ENCODE measurements at regions of chr6 and their contacts with region 1.

Region 1: GRCh38 chr6:29938746-29939508 is 3.4 kb upstream of the HLA-A start:
- DNase-seq: no peak
- H3K4me3 Mint-ChIP-seq: no peak overlapping the region
- H3K27ac Mint-ChIP-seq: no peak overlapping the region
- H3K4me1 Mint-ChIP-seq: peaks cover 14% of the 10 kb centered on the region
- H3K27me3 Mint-ChIP-seq: no peaks in the 10 kb centered on the region
- CTCF ChIP-seq: no peak

Region 2: DNA sequence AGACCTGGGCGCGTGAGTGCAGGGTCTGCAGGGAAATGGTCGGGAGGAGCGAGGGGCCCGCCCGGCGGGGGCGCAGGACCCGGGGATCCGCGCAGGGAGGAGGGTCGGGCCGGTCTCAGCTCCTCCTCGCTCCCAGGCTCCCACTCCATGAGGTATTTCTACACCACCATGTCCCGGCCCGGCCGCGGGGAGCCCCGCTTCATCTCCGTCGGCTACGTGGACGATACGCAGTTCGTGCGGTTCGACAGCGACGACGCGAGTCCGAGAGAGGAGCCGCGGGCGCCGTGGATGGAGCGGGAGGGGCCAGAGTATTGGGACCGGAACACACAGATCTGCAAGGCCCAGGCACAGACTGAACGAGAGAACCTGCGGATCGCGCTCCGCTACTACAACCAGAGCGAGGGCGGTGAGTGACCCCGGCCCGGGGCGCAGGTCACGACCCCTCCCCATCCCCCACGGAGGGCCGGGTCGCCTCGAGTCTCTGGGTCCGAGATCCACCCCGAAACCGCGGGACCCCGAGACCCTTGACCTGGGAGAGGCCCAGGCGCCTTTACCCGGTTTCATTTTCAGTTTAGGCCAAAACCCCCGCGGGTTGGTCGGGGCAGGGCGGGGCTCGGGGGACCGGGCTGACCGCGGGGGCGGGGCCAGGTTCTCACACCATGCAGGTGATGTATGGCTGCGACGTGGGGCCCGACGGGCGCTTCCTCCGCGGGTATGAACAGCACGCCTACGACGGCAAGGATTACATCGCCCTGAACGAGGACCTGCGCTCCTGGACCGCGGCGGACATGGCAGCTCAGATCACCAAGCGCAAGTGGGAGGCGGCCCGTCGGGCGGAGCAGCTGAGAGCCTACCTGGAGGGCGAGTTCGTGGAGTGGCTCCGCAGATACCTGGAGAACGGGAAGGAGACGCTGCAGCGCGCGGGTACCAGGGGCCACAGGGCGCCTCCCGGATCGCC is 50.8 kb before region 1 on chr6:
- CTCF ChIA-PET with region 1: no interaction called
- intact Hi-C with region 1: loop called (anchors 2 kb)
- DNase-seq: peak; percentile 77
- H3K4me3 Mint-ChIP-seq: peak overlapping the region; percentile 79
- H3K27ac Mint-ChIP-seq: peak overlapping the region; percentile 52
- H3K4me1 Mint-ChIP-seq: peaks cover 9% of the 10 kb centered on the region
- H3K27me3 Mint-ChIP-seq: no peaks in the 10 kb centered on the region
- CTCF ChIP-seq: no peak